ENCODE measurements at regions of chr4 and their contacts with region 1.

Region 1: DNA sequence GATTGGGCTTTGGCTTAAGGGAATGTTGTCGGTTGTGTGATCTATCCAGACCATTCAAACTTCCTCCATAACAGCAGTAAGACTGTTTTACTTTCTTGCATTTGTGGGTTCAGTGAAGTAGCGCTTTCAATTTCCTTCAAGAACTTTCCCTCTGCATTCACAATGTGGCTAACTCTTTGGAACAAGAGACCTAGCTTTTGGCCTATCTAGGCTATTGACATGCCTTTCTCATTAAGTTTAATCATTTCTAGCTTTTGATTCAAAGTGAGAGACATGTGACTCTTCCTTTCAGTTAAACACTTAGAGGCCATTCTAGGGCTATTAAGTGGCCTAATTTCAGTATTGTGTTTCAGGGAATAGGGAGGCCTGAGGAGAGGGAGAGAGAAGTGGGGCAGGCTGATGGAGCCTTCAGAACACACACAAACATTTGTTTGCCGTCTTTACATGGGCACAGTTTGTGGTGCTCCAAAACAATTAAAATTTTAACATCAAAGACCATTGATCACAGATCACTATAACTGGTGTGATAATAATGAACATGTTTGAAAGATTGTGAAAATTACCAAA is 34.1 kb downstream of the ADH5 start:
- DNase-seq: no peak
- H3K4me3 ChIP-seq: no peak overlapping the region
- H3K27ac ChIP-seq: no peak overlapping the region
- H3K4me1 ChIP-seq: no peaks in the 10 kb centered on the region
- H3K27me3 ChIP-seq: no peaks in the 10 kb centered on the region
- CTCF ChIP-seq: no peak
- POLR2A ChIP-seq: no peak

Region 2: DNA sequence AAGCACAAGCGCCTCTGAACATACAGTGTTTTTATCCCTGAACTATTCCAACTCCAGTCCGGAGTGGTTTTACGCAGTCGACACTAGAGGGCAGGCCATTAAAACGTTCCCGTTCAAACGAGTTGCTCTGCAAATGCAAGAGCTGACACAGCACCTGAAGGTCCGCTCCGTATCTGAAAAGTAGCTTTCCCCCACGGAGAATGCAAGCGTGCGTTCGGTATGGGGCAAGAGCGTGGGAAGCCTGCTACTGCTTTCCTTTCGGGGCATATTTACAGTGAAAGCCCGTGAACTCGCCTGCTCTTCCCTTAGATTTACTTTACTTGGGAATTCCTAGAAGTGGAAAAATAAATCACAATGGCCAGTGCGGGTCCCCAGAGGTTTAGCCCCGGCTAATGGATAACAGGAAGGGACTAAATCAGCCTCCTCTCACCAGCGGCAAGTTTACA is 586.9 kb before region 1 on chr4:
- intact Hi-C with region 1: loop called in 1 of 2 experiments (anchors 10 kb)
- DNase-seq: peak; percentile 75 to 90 (median 81)
- H3K4me3 ChIP-seq: peak overlapping the region in 1 of 4 donors; percentile 49
- H3K27ac ChIP-seq: no peak overlapping the region
- H3K4me1 ChIP-seq: peaks cover 0 to 8% of the 10 kb centered on the region in 2 donors
- H3K27me3 ChIP-seq: no peaks in the 10 kb centered on the region
- CTCF ChIP-seq: peak; percentile 61 to 76 (median 74)
- POLR2A ChIP-seq: no peak

Region 3: GRCh38 chr4:98929341-98930267 is 124.9 kb before region 1 on chr4:
- intact Hi-C with region 1: loop called in 1 of 2 experiments (anchors 10 kb)
- DNase-seq: peak; percentile 78 to 90 (median 88)
- H3K4me3 ChIP-seq: peak overlapping the region; percentile 43 to 96 (median 88)
- H3K27ac ChIP-seq: peak overlapping the region; percentile 87 to 100 (median 97)
- H3K4me1 ChIP-seq: peaks cover 18 to 23% of the 10 kb centered on the region in 2 donors
- H3K27me3 ChIP-seq: no peaks in the 10 kb centered on the region
- CTCF ChIP-seq: peak in 5 of 6 experiments; percentile 3 to 54 (median 53)
- POLR2A ChIP-seq: peak; percentile 63 to 89

Region 4: GRCh38 chr4:98995183-98996055 is 59.1 kb before region 1 on chr4 and contains the start of gene METAP1:
- intact Hi-C with region 1: loop called (anchors 10 kb)
- DNase-seq: peak; percentile 91 to 96 (median 94)
- H3K4me3 ChIP-seq: peak within 1 kb of the TSS; percentile 33 to 98 (median 93)
- H3K27ac ChIP-seq: peak within 1 kb of the TSS; percentile 49 to 89 (median 85)
- H3K4me1 ChIP-seq: peaks cover 0 to 16% of the 10 kb centered on the region in 2 donors
- H3K27me3 ChIP-seq: no peaks in the 10 kb centered on the region
- CTCF ChIP-seq: peak; percentile 6 to 50 (median 44)
- POLR2A ChIP-seq: peak; percentile 39 to 74
- total RNA-seq, gene METAP1: 12.1 to 35.3 (median 18.3) TPM

Region 5: DNA sequence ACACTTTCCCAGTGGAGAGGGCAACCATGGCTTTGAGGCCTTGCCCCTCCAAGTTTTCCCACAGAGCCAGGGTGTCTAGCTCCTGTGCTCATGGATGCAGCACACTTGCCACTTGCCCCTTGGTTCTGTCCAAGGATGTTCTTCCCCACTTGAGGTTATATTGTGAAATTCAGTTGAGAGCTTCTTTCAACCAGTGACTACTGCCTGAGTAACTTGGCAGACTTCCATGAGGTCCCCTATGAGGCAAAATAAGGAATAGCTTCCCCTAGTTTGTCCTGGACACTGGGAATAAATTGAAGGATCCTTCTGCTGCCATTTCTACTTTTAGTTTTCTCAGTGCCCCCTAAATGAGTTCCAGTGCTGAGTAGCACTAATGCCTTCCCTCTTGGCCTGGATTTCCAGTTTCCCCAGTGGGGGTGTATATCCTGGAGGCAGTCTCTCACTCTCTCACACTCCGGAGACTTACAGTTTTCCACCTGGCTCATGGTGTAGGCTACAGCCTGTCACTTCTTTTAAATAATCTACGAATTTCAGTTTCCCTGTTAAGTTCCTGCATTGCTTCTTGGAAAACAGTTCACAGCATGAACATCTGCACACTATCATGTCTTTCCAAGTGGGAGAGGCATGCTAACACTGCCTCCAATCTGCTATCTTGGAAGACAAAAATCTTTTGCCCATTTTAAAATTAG is 126.0 kb after region 1 on chr4:
- intact Hi-C with region 1: no loop called
- DNase-seq: peak in 3 of 7 donors; percentile 3 to 19 (median 8)
- H3K4me3 ChIP-seq: no peak overlapping the region
- H3K27ac ChIP-seq: no peak overlapping the region
- H3K4me1 ChIP-seq: no peaks in the 10 kb centered on the region
- H3K27me3 ChIP-seq: no peaks in the 10 kb centered on the region
- CTCF ChIP-seq: no peak
- POLR2A ChIP-seq: no peak

Region 6: GRCh38 chr4:99264927-99265326 is 210.4 kb after region 1 on chr4:
- intact Hi-C with region 1: no loop called
- DNase-seq: no peak
- H3K4me3 ChIP-seq: no peak overlapping the region
- H3K27ac ChIP-seq: no peak overlapping the region
- H3K4me1 ChIP-seq: no peaks in the 10 kb centered on the region
- H3K27me3 ChIP-seq: no peaks in the 10 kb centered on the region
- CTCF ChIP-seq: no peak
- POLR2A ChIP-seq: no peak